Posterior cingulate gyrus (tissue), 11 donors: ENCODE measurements at regions of chr19 and their contacts with region 1.

Region 1: GRCh38 chr19:42794765-42795164 is 29.3 kb upstream of the PSG8 start:
- DNase-seq: no peak

Region 2: GRCh38 chr19:42857561-42857901 is 62.8 kb after region 1 on chr19:
- intact Hi-C with region 1: loop called (anchors 5 kb)
- DNase-seq: no peak

Region 3: DNA sequence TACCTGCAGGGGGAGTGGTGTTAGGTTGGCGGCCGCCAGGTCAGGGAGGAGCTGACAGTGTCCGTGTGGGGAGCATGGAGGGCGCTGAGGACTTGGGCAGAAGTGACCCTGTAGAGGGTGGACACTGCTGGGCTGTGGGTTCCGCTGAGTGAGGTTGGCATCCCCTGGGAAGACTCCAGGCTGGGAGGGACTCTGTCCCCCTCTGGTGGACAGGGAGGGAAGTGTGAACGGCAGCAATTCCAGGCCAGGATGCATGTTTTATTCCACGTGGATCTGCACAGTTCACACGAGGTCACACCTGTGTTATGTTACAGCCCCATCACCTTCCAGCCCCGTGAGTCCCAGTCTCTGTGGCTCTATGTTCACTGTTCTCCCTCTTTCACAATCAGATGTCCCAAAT is 86.5 kb after region 1 on chr19:
- intact Hi-C with region 1: loop called (anchors 1 kb)
- DNase-seq: no peak